ENCODE measurements at regions of chr3 and their contacts with region 1.

Region 1: GRCh38 chr3:45593708-45594609 is 592 bp upstream of the LIMD1 start:
- DNase-seq: peak; percentile 88

Region 2: DNA sequence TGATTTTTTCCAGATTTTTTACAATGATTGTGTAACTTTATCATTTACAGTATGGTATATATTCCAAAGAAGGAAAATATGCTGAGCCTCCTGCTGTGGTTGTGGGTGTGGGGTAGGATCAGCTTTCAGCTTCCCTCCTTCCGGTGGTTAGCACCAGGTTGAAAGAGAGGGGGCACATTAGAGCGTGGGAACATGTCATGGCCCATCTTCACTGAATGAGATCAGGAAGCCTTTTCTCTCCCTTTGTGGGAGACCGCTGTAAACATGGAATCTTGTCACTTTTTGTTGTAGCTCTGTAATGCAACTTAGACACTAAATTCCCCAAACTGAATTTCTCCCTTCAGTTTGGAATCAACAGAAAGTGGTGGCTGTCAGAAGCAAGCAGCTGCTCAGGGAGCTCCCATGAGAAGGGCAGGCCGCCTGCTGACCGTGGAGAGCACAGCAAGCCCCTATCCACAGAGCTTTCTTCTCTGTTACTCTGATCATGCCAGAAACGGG is 86.1 kb before region 1 on chr3:
- intact Hi-C with region 1: loop called (anchors 5 kb)
- DNase-seq: no peak

Region 3: GRCh38 chr3:45553996-45554666 is 39.8 kb before region 1 on chr3:
- intact Hi-C with region 1: loop called (anchors 5 kb)
- DNase-seq: peak; percentile 81

Region 4: GRCh38 chr3:45612918-45613602 is 19.1 kb after region 1 on chr3:
- intact Hi-C with region 1: no loop called
- DNase-seq: peak; percentile 14

Region 5: DNA sequence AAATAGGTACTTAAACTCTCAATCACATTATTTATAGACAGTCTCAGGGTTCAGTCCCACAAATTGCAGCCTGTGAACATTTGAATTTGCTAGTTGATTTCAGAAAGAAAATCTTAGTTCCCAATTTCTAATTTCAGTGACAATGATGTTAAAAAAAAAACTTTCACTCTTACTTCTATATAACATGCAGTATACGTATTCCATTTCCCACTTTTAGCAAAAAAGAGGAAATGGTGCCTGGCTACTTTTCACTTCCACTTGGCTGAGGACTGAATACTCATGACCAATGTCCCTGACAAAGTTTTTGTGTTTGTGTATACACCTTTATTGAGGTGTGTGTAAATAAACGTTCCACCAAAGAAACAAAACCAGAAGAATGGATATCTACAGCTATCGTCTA is 465.5 kb after region 1 on chr3:
- intact Hi-C with region 1: no loop called
- DNase-seq: no peak